ENCODE measurements at regions of chr2 and their contacts with region 1.

Region 1: DNA sequence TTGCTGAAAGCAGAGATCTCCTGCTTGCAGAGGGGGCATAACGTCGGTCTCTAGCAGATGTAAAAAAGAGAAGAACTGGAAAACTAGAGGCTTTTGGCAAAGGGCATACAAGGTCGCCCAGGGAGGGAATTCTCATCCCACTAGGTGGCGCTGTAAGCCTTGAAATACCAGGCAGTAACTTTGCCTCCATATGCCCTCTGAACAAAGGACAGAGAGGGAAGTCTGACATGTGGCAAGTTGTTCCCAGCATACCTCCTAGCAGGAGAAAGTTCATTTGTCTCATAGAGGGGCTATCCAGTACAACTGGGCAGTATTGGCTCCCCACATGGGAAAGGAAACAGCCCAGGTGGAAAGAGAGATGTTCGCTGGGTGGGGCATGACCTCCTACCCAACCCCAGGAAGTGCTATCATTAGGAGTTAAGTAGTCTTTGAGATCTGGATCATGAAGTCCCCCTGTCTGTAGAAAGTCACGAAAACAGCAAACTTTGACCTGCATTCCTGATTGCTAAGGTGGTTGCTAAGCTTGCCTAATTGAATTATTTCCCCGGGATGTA is 39.9 kb downstream of the STK17B start:
- DNase-seq: peak; percentile 39 to 87 (median 46)
- ATAC-seq: peak; percentile 87
- H3K4me3 ChIP-seq: no peak overlapping the region
- H3K27ac ChIP-seq: no peak overlapping the region
- H3K4me1 ChIP-seq: peaks cover 0 to 25% of the 10 kb centered on the region in 2 experiments; a peak in 3 of 5 replicates
- H3K27me3 ChIP-seq: no peaks in the 10 kb centered on the region
- CTCF ChIP-seq: peak; percentile 71 to 80 (median 76)
- EP300 ChIP-seq: no peak
- POLR2A ChIP-seq: no peak
- RAD21 ChIP-seq: peak; percentile 91 to 93

Region 2: GRCh38 chr2:195967336-195967735 is 164.1 kb before region 1 on chr2:
- CTCF ChIA-PET with region 1: no interaction called
- POLR2A ChIA-PET with region 1: no interaction called
- in situ Hi-C with region 1: no loop called
- intact Hi-C with region 1: no loop called
- DNase-seq: no peak
- ATAC-seq: no peak
- H3K4me3 ChIP-seq: no peak overlapping the region
- H3K27ac ChIP-seq: no peak overlapping the region
- H3K4me1 ChIP-seq: no peaks in the 10 kb centered on the region
- H3K27me3 ChIP-seq: no peaks in the 10 kb centered on the region
- CTCF ChIP-seq: no peak
- EP300 ChIP-seq: no peak
- POLR2A ChIP-seq: no peak
- RAD21 ChIP-seq: no peak

Region 3: GRCh38 chr2:196076778-196077568 is 54.5 kb before region 1 on chr2:
- CTCF ChIA-PET with region 1: interaction called, 3 read pairs
- POLR2A ChIA-PET with region 1: no interaction called
- in situ Hi-C with region 1: no loop called
- intact Hi-C with region 1: loop called (anchors 1 kb)
- DNase-seq: no peak
- ATAC-seq: peak; percentile 46
- H3K4me3 ChIP-seq: no peak overlapping the region
- H3K27ac ChIP-seq: no peak overlapping the region
- H3K4me1 ChIP-seq: no peaks in the 10 kb centered on the region
- H3K27me3 ChIP-seq: no peaks in the 10 kb centered on the region
- CTCF ChIP-seq: no peak
- EP300 ChIP-seq: no peak
- POLR2A ChIP-seq: no peak
- RAD21 ChIP-seq: no peak

Region 4: DNA sequence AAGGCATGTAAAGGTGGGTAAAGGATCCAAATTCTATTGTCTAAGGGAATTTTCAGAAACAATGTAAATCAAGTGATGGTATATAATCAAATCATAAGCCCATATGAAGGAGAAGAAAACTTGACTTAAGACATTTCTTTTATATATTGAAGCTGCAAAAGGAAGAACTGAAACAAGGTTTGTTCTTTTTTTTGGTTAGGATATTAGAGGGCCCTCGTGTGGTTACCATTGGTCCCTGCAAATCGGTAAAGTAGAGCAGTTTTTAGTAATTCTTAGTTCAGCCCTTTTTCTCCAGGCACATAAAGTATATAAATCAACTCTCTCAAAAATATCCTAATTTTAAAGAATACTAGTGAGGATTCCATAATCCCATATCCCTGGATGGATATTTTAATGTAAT is 145.5 kb after region 1 on chr2:
- CTCF ChIA-PET with region 1: interaction called, 11 read pairs
- POLR2A ChIA-PET with region 1: no interaction called
- in situ Hi-C with region 1: loop called (anchors 5 kb)
- intact Hi-C with region 1: loop called (anchors 1 kb)
- DNase-seq: peak; percentile 15 to 29 (median 23)
- ATAC-seq: peak; percentile 60; the same call in 2 of the 3 replicates
- H3K4me3 ChIP-seq: no peak overlapping the region
- H3K27ac ChIP-seq: no peak overlapping the region
- H3K4me1 ChIP-seq: peaks cover 0 to 7% of the 10 kb centered on the region in 2 experiments; a peak in 2 of 5 replicates
- H3K27me3 ChIP-seq: no peaks in the 10 kb centered on the region
- CTCF ChIP-seq: peak; percentile 28 to 56 (median 38); a peak in 4 of 6 replicates
- EP300 ChIP-seq: no peak
- POLR2A ChIP-seq: no peak
- RAD21 ChIP-seq: peak; percentile 66 to 72

Region 5: GRCh38 chr2:196337208-196337953 is 205.9 kb after region 1 on chr2:
- CTCF ChIA-PET with region 1: interaction called, 7 read pairs
- POLR2A ChIA-PET with region 1: no interaction called
- in situ Hi-C with region 1: loop called (anchors 5 kb)
- intact Hi-C with region 1: loop called (anchors 1 kb)
- DNase-seq: peak; percentile 31 to 46 (median 41)
- ATAC-seq: peak; percentile 84
- H3K4me3 ChIP-seq: no peak overlapping the region
- H3K27ac ChIP-seq: no peak overlapping the region
- H3K4me1 ChIP-seq: no peaks in the 10 kb centered on the region
- H3K27me3 ChIP-seq: no peaks in the 10 kb centered on the region
- CTCF ChIP-seq: peak; percentile 31 to 52 (median 48); a peak in 3 of 6 replicates
- EP300 ChIP-seq: no peak
- POLR2A ChIP-seq: no peak
- RAD21 ChIP-seq: peak in 1 of 2 experiments; percentile 61; a peak in 2 of 4 replicates

Region 6: DNA sequence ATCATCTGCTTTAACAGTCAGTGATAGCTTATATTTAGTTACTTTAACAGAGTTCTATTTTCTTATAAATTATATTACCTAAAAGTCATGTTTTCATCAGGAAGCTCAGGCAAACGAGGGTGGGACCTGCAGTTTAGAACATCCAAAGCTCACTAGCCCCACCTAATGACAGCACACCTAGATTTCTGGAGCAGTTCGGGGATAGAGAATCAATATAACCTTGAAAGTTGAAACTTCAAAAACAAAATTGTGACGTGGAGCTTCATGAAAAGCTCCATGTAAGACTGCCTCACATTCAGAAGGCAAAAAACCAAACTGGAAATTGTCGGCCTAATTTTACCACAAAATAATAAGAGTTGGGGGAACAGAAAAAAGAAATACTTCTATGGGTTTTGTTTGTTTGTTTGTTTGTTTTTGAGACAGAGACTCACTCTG is 322.2 kb after region 1 on chr2:
- CTCF ChIA-PET with region 1: interaction called, 4 read pairs
- POLR2A ChIA-PET with region 1: no interaction called
- in situ Hi-C with region 1: no loop called
- intact Hi-C with region 1: loop called (anchors 1 kb)
- DNase-seq: peak; percentile 7 to 67 (median 14)
- ATAC-seq: peak; percentile 88
- H3K4me3 ChIP-seq: no peak overlapping the region
- H3K27ac ChIP-seq: no peak overlapping the region
- H3K4me1 ChIP-seq: no peaks in the 10 kb centered on the region
- H3K27me3 ChIP-seq: no peaks in the 10 kb centered on the region
- CTCF ChIP-seq: peak; percentile 48 to 73 (median 64); a peak in 5 of 6 replicates
- EP300 ChIP-seq: no peak
- POLR2A ChIP-seq: no peak
- RAD21 ChIP-seq: peak; percentile 62 to 79

Region 7: GRCh38 chr2:196725882-196726281 is 594.4 kb after region 1 on chr2:
- CTCF ChIA-PET with region 1: no interaction called
- POLR2A ChIA-PET with region 1: no interaction called
- in situ Hi-C with region 1: loop called (anchors 25 kb)
- intact Hi-C with region 1: no loop called
- DNase-seq: no peak
- ATAC-seq: no peak
- H3K4me3 ChIP-seq: no peak overlapping the region
- H3K27ac ChIP-seq: no peak overlapping the region
- H3K4me1 ChIP-seq: no peaks in the 10 kb centered on the region
- H3K27me3 ChIP-seq: no peaks in the 10 kb centered on the region
- CTCF ChIP-seq: no peak
- EP300 ChIP-seq: no peak
- POLR2A ChIP-seq: no peak
- RAD21 ChIP-seq: no peak